K562 (cell line): ENCODE measurements at regions of chr1 and their contacts with region 1.

Region 1: GRCh38 chr1:213244664-213245091 is 193.6 kb downstream of the RPS6KC1 start:
- DNase-seq: peak; percentile 58 to 74 (median 64)
- ATAC-seq: peak; percentile 77
- H3K4me3 ChIP-seq: no peak overlapping the region
- H3K27ac ChIP-seq: no peak overlapping the region
- H3K4me1 ChIP-seq: no peaks in the 10 kb centered on the region
- H3K27me3 ChIP-seq: no peaks in the 10 kb centered on the region
- CTCF ChIP-seq: peak; percentile 59 to 87 (median 77)
- EP300 ChIP-seq: no peak
- POLR2A ChIP-seq: no peak
- RAD21 ChIP-seq: peak; percentile 73 to 82

Region 2: GRCh38 chr1:213122514-213122929 is 122.2 kb before region 1 on chr1:
- CTCF ChIA-PET with region 1: no interaction called
- POLR2A ChIA-PET with region 1: no interaction called
- in situ Hi-C with region 1: no loop called
- intact Hi-C with region 1: loop called (anchors 5 kb)
- DNase-seq: peak; percentile 19 to 77 (median 26)
- ATAC-seq: 0 out of 3 replicates have a peak, but pooled peaks have one; percentile 21
- H3K4me3 ChIP-seq: no peak overlapping the region
- H3K27ac ChIP-seq: peak overlapping the region; percentile 10; the same call in 2 of the 3 replicates
- H3K4me1 ChIP-seq: peaks cover 0 to 31% of the 10 kb centered on the region in 2 experiments
- H3K27me3 ChIP-seq: no peaks in the 10 kb centered on the region
- CTCF ChIP-seq: peak in 2 of 3 experiments; percentile 29 to 70; a peak in 4 of 6 replicates
- EP300 ChIP-seq: no peak
- POLR2A ChIP-seq: no peak
- RAD21 ChIP-seq: peak; percentile 45 to 66

Region 3: GRCh38 chr1:213374369-213374768 is 129.7 kb after region 1 on chr1:
- CTCF ChIA-PET with region 1: no interaction called
- POLR2A ChIA-PET with region 1: no interaction called
- in situ Hi-C with region 1: no loop called
- intact Hi-C with region 1: loop called (anchors 5 kb)
- DNase-seq: peak; percentile 77 to 83 (median 82)
- ATAC-seq: peak; percentile 95
- H3K4me3 ChIP-seq: no peak overlapping the region
- H3K27ac ChIP-seq: no peak overlapping the region
- H3K4me1 ChIP-seq: no peaks in the 10 kb centered on the region
- H3K27me3 ChIP-seq: peaks cover 3 to 8% of the 10 kb centered on the region in 2 experiments; a peak in 4 of 5 replicates
- CTCF ChIP-seq: peak; percentile 79 to 94 (median 89)
- EP300 ChIP-seq: no peak
- POLR2A ChIP-seq: no peak
- RAD21 ChIP-seq: peak; percentile 73 to 86

Region 4: DNA sequence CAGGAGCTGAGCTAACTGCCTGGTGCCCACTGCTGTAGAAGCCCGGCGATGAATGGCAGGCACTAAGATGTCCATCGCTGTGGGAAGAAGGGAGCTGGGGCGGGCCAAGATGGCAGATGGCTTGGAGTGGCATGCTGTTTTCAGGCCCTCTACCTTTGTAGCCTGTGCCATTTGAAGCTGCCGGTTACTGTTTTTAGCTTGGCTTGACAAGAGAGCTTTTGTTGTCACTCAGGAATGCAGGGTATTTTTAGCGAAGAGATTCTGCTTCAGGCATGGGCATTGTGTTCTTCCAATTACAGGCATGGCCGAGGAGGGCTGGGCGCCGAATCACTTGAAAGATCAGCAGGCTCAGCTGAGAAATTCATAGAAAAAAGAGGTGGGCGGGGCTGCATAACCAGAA is 155.0 kb after region 1 on chr1:
- CTCF ChIA-PET with region 1: no interaction called
- POLR2A ChIA-PET with region 1: no interaction called
- in situ Hi-C with region 1: no loop called
- intact Hi-C with region 1: no loop called
- DNase-seq: no peak
- ATAC-seq: no peak
- H3K4me3 ChIP-seq: no peak overlapping the region
- H3K27ac ChIP-seq: no peak overlapping the region
- H3K4me1 ChIP-seq: no peaks in the 10 kb centered on the region
- H3K27me3 ChIP-seq: peaks cover 14 to 40% of the 10 kb centered on the region in 2 experiments
- CTCF ChIP-seq: no peak
- EP300 ChIP-seq: no peak
- POLR2A ChIP-seq: no peak
- RAD21 ChIP-seq: no peak

Region 5: GRCh38 chr1:213419369-213420030 is 174.8 kb after region 1 on chr1:
- CTCF ChIA-PET with region 1: no interaction called
- POLR2A ChIA-PET with region 1: no interaction called
- in situ Hi-C with region 1: no loop called
- intact Hi-C with region 1: loop called (anchors 1 kb)
- DNase-seq: no peak
- ATAC-seq: peak; percentile 55; the same call in 2 of the 3 replicates
- H3K4me3 ChIP-seq: no peak overlapping the region
- H3K27ac ChIP-seq: no peak overlapping the region
- H3K4me1 ChIP-seq: no peaks in the 10 kb centered on the region
- H3K27me3 ChIP-seq: peaks cover 39 to 55% of the 10 kb centered on the region in 2 experiments
- CTCF ChIP-seq: peak in 2 of 3 experiments; percentile 24 to 27; a peak in 1 of 6 replicates
- EP300 ChIP-seq: no peak
- POLR2A ChIP-seq: no peak
- RAD21 ChIP-seq: peak in 1 of 2 experiments; percentile 35; a peak in 1 of 4 replicates

Region 6: DNA sequence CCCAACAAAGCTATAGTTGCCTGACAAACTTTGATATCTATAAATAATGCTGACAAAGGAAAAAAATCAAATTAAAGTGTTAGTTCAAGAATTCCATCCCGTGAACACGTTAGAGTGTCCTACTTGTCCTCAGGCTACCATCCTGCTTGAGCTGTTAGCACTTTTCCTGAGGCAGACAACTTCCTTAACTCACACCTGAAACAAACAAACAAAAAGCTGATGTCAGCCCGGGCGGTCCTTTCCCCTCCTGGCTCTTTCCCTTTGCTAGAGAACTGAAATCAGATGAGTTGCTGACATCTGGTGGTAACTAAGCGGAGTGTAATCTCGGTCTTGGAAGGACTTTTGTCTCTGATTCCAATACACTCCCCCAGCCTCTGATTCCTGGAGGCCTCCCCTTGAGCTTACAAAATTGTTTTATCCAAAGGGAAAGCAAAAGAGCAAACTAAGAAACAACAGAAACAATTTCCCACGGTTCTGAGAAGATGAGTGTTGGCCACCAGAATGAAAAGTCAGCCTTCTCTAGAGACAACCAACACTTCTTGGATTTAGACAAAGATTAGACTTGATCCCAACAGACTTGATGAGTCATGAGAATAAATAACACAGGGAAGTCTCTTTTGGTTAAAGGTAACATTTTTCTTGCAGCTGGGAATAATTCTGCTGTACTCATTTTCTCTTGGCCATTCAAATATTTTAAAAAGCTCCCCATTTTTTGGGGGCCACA is 878.5 kb after region 1 on chr1:
- CTCF ChIA-PET with region 1: interaction called, 9 read pairs
- POLR2A ChIA-PET with region 1: no interaction called
- in situ Hi-C with region 1: no loop called
- intact Hi-C with region 1: loop called (anchors 1 kb)
- DNase-seq: peak; percentile 24 to 61 (median 45)
- ATAC-seq: peak; percentile 97
- H3K4me3 ChIP-seq: no peak overlapping the region
- H3K27ac ChIP-seq: no peak overlapping the region
- H3K4me1 ChIP-seq: no peaks in the 10 kb centered on the region; a peak in 1 of 5 replicates
- H3K27me3 ChIP-seq: peaks cover 0 to 5% of the 10 kb centered on the region in 2 experiments; a peak in 3 of 5 replicates
- CTCF ChIP-seq: peak; percentile 51 to 69 (median 56)
- EP300 ChIP-seq: no peak
- POLR2A ChIP-seq: no peak
- RAD21 ChIP-seq: peak; percentile 92 to 93